Heart left ventricle (tissue), 16 donors: ENCODE measurements at regions of chr9 and their contacts with region 1.

Region 1: DNA sequence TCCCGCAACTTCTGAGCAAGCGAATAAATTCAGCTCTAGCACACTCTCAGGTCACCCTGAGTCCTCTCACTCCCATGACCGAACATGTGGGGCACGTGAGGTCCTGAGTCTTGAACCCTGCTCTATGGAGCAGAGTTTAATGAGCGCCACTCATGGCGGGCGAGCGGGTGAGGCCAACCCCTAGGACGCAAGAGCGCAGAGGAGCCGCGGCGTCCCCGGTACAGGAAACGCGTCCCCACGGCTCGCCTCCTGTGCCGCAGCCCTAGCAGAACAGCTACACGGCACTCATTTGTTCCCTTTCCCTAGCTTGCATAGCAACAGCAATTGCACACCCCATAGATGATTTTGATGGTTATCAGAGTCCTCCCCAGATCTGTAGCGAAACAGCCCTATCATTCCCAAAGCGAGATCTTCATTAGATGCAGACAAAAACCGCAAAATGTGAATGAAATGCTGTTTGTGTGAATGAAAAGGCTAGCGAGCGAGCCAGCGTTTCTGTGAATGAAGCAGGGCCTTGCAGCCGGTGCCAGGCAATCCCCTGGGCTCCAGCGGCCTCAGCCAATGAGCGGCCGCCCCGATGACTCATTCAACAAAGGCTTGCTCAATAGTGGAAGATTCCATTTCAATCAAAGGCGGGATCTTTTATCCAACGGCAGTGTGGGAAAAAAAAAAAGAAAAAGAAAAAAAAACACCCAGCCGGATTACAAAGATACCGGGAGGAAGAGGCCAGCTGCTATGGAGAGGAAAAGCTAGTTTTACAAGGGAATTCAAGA is 1.5 kb upstream of the SHC3 start:
- DNase-seq: peak; percentile 83 to 93 (median 91)
- ATAC-seq: peak; percentile 95 to 97 (median 96)
- H3K4me3 ChIP-seq: peak overlapping the region; percentile 24 to 62 (median 48)
- H3K27ac ChIP-seq: peak overlapping the region in 11 of 12 donors; percentile 51 to 79 (median 69)
- H3K4me1 ChIP-seq: peaks cover 0 to 39% (median 22%) of the 10 kb centered on the region in 12 donors
- H3K27me3 ChIP-seq: peaks cover 5 to 49% (median 29%) of the 10 kb centered on the region in 9 donors
- CTCF ChIP-seq: no peak
- POLR2A ChIP-seq: peak in 1 of 2 donors; percentile 61

Region 2: DNA sequence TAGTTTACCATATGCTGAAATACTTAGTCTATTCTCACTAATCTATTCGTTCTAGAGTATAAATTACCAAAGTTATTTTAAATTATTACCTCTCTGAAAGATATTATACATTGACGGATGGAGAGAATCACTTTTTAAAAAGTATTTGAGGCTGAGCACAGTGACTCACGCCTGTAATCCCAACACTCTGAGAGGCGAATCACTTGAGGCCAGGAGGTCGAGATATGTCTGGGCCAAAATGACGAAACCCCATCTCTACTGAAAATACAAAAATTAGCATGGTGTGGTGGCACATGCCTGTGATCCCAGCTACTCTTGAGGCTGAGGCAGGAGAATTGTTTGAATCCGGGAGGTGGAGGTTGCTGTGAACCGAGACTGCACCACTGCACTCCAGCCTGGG is 977.8 kb before region 1 on chr9:
- intact Hi-C with region 1: no loop called
- DNase-seq: no peak
- ATAC-seq: no peak
- H3K4me3 ChIP-seq: no peak overlapping the region
- H3K27ac ChIP-seq: no peak overlapping the region
- H3K4me1 ChIP-seq: peaks cover 0 to 16% (median 0%) of the 10 kb centered on the region in 12 donors
- H3K27me3 ChIP-seq: no peaks in the 10 kb centered on the region
- CTCF ChIP-seq: no peak
- POLR2A ChIP-seq: no peak

Region 3: DNA sequence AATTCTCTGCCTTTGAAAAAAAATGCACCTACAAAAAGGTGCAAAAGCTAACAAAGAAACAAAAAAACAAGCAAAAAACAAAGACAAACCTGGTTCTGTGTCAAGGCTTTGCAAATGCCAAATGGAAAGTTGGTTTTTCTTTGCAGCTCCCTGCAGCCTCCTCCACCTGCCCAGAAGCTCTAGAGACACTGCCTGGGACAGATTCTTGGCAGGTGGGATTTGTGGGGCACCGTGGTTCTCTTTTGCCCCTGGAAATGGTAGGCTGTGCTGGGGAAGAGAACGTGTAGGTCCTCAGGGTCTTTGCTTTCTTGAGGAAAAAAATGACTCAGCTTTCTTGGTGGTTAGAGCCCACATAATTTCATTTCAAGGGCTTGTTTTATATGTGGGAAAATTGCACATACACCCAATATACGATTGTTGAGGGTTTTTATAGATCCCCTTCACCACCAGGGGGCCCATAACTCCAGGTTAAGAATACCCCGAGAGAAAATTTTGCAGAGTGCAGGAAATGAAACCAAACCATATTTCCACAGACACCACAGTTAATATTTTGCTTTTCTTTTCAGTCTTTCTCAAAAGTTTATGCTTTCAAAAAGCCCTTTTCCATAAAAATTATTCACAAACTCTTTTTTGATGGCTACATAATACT is 586.4 kb before region 1 on chr9:
- intact Hi-C with region 1: loop called in 1 of 10 experiments (anchors 10 kb)
- DNase-seq: peak in 3 of 5 donors; percentile 59 to 66 (median 62)
- ATAC-seq: peak in 3 of 4 donors; percentile 68 to 76 (median 71)
- H3K4me3 ChIP-seq: no peak overlapping the region
- H3K27ac ChIP-seq: no peak overlapping the region
- H3K4me1 ChIP-seq: peaks cover 0 to 4% (median 0%) of the 10 kb centered on the region in 12 donors
- H3K27me3 ChIP-seq: no peaks in the 10 kb centered on the region
- CTCF ChIP-seq: peak; percentile 51 to 79 (median 70)
- POLR2A ChIP-seq: no peak

Region 4: GRCh38 chr9:89021154-89021803 is 158.8 kb before region 1 on chr9:
- intact Hi-C with region 1: loop called in 2 of 10 experiments (anchors 10 kb)
- DNase-seq: peak in 2 of 5 donors; percentile 42 to 62
- ATAC-seq: peak in 3 of 4 donors; percentile 22 to 79 (median 62)
- H3K4me3 ChIP-seq: no peak overlapping the region
- H3K27ac ChIP-seq: peak overlapping the region in 10 of 12 donors; percentile 20 to 70 (median 50)
- H3K4me1 ChIP-seq: peaks cover 0 to 30% (median 24%) of the 10 kb centered on the region in 12 donors
- H3K27me3 ChIP-seq: no peaks in the 10 kb centered on the region
- CTCF ChIP-seq: no peak
- POLR2A ChIP-seq: no peak

Region 5: GRCh38 chr9:89194421-89195130 is 14.5 kb after region 1 on chr9:
- intact Hi-C with region 1: no loop called
- DNase-seq: no peak
- ATAC-seq: no peak
- H3K4me3 ChIP-seq: no peak overlapping the region
- H3K27ac ChIP-seq: no peak overlapping the region
- H3K4me1 ChIP-seq: no peaks in the 10 kb centered on the region
- H3K27me3 ChIP-seq: no peaks in the 10 kb centered on the region
- CTCF ChIP-seq: no peak
- POLR2A ChIP-seq: no peak

Region 6: GRCh38 chr9:89295400-89295799 is 115.3 kb after region 1 on chr9:
- intact Hi-C with region 1: no loop called
- DNase-seq: no peak
- ATAC-seq: no peak
- H3K4me3 ChIP-seq: no peak overlapping the region
- H3K27ac ChIP-seq: no peak overlapping the region
- H3K4me1 ChIP-seq: no peaks in the 10 kb centered on the region
- H3K27me3 ChIP-seq: no peaks in the 10 kb centered on the region
- CTCF ChIP-seq: no peak
- POLR2A ChIP-seq: no peak

Region 7: GRCh38 chr9:89318123-89319014 is 138.3 kb after region 1 on chr9 and contains the start of gene SECISBP2:
- intact Hi-C with region 1: loop called in 1 of 10 experiments (anchors 10 kb)
- DNase-seq: peak; percentile 96 to 98 (median 98)
- ATAC-seq: peak; percentile 98 to 99 (median 99)
- H3K4me3 ChIP-seq: peak within 1 kb of the TSS; percentile 51 to 94 (median 74)
- H3K27ac ChIP-seq: peak within 1 kb of the TSS; percentile 94 to 100 (median 99)
- H3K4me1 ChIP-seq: peaks cover 5 to 70% (median 36%) of the 10 kb centered on the region in 12 donors
- H3K27me3 ChIP-seq: no peaks in the 10 kb centered on the region
- CTCF ChIP-seq: peak in 10 of 12 donors; percentile 68 to 95 (median 80)
- POLR2A ChIP-seq: peak; percentile 64 to 93
- total RNA-seq, gene SECISBP2: 13.0 to 25.3 (median 15.5) TPM